ENCODE measurements at regions of chr14 and their contacts with region 1.

Region 1: GRCh38 chr14:73173092-73173735 is 36.9 kb downstream of the PSEN1 start:
- DNase-seq: peak; percentile 73
- H3K4me3 ChIP-seq: no peak overlapping the region
- H3K27ac ChIP-seq: no peak overlapping the region
- H3K4me1 ChIP-seq: no peaks in the 10 kb centered on the region
- H3K27me3 ChIP-seq: no peaks in the 10 kb centered on the region
- CTCF ChIP-seq: peak; percentile 21 to 25
- POLR2A ChIP-seq: no peak

Region 2: GRCh38 chr14:73049428-73049827 is 123.8 kb before region 1 on chr14:
- CTCF ChIA-PET with region 1: no interaction called
- POLR2A ChIA-PET with region 1: no interaction called
- dilution Hi-C with region 1: no loop called
- intact Hi-C with region 1: no loop called
- DNase-seq: no peak
- H3K4me3 ChIP-seq: no peak overlapping the region
- H3K27ac ChIP-seq: no peak overlapping the region
- H3K4me1 ChIP-seq: no peaks in the 10 kb centered on the region
- H3K27me3 ChIP-seq: no peaks in the 10 kb centered on the region
- CTCF ChIP-seq: no peak
- POLR2A ChIP-seq: no peak

Region 3: DNA sequence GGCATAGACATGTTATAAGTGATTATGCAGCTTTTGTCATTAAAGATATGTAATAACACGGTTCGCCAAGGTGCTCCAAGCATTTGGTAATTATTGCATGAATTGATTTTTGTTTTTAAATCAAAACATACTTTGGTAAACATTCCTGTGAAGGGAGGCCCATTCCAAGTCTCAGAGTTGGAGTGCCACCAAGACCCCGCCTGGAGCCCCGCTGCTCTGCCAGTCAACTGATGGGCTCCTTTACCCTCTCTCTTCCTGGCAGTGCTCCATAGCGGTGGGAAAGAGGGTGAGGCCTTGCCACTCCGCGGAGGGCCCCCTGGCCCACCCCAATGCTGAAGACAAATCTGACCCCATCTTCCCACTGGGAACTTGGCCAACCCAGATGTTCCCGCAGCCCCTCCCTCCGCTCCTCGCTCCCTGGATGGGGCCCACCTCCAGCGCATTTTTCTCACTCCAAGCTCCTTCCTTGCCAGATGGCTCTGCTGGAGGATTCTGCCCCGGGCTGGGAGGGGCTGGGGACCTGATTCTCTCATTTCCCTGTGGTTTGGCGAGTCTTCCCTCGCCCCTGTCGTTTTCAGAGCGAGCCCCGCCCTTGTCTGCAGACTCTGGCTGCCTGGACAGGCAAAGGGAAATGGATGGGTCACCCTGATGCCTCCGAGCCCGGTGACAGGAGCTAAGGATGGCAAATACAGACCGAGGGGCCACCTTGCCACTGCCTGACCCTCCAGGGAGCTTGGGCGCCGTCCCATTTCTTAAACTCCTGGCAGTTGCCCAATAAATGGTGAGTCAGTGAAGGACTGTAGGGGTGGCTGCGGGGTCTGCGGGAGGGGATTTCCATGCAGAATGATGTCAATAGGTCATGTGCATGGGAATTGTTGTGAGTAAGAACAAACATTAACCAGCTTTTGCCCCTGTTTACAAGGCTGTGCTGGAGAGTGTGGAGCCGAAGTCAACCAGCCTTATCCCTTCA is 54.9 kb after region 1 on chr14:
- CTCF ChIA-PET with region 1: interaction called, 11 read pairs
- POLR2A ChIA-PET with region 1: no interaction called
- dilution Hi-C with region 1: no loop called
- intact Hi-C with region 1: no loop called
- DNase-seq: peak; percentile 96
- H3K4me3 ChIP-seq: peak overlapping the region in 1 of 3 experiments; percentile 11
- H3K27ac ChIP-seq: peak overlapping the region; percentile 78
- H3K4me1 ChIP-seq: peaks cover 36% of the 10 kb centered on the region
- H3K27me3 ChIP-seq: no peaks in the 10 kb centered on the region
- CTCF ChIP-seq: no peak
- POLR2A ChIP-seq: no peak

Region 4: GRCh38 chr14:73269729-73270531 is 96.7 kb after region 1 on chr14:
- CTCF ChIA-PET with region 1: interaction called, 39 read pairs
- POLR2A ChIA-PET with region 1: no interaction called
- dilution Hi-C with region 1: no loop called
- intact Hi-C with region 1: loop called (anchors 1 kb)
- DNase-seq: peak; percentile 61
- H3K4me3 ChIP-seq: peak overlapping the region; percentile 17 to 44 (median 32)
- H3K27ac ChIP-seq: peak overlapping the region; percentile 28
- H3K4me1 ChIP-seq: peaks cover 15% of the 10 kb centered on the region
- H3K27me3 ChIP-seq: no peaks in the 10 kb centered on the region
- CTCF ChIP-seq: no peak
- POLR2A ChIP-seq: peak; percentile 70

Region 5: DNA sequence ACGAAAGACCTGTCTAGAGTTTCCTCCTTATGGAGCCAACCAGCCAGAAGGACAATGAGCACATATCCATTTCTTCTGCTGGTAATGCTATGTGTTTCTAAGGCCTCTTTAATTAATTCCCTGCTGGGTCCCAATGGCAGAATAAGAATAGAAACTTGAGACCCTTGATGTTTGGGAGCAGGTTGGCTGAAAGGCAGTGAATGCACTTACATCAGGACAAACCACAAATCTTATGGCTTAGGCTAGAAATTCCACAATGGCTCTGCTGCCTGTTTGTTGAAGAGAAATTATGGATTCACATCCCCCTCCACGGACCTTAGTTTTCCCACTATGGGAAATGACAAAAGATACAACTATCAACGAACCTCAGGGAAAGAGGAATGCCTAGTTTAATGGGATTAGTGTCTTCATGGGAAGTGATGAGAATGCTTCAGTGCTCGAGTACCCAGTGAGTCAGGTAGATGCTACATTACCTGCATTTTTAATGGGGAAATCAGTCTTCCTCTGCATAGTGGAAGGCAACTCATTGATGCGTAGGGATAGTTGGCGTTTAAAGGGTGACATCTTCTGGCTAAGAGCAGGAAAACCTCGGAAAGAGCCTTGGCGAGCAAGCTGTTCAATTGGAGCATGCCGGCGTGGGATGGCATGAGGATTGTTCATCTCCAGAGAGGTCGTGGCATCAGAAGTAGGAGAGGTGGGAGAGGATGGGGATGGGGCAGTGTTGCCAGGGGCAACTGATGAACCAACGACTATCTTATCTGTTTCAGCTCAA is 110.6 kb after region 1 on chr14:
- CTCF ChIA-PET with region 1: interaction called, 43 read pairs
- POLR2A ChIA-PET with region 1: interaction called, 6 read pairs
- dilution Hi-C with region 1: no loop called
- intact Hi-C with region 1: no loop called
- DNase-seq: no peak
- H3K4me3 ChIP-seq: no peak overlapping the region
- H3K27ac ChIP-seq: no peak overlapping the region
- H3K4me1 ChIP-seq: no peaks in the 10 kb centered on the region
- H3K27me3 ChIP-seq: no peaks in the 10 kb centered on the region
- CTCF ChIP-seq: peak in 1 of 2 donors; percentile 25
- POLR2A ChIP-seq: no peak

Region 6: DNA sequence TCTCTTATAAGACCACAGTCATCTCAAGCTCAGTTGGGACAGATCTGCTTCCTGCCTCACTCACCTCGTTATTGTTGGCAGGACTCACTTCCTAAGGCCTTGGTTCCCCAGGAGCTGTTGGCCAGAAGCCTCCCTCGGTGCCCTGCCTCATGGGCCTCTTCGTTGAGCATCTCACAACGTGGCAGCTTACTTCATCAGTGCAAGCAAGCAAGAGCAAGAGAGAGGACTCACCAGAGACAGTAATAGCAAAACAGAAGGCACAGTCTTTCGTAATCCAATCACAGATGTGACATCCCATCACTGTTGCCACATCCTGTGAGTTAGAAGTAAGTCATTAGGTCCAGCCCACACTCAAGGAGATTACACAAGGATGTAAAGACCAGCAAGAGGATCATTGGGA is 290.2 kb after region 1 on chr14:
- CTCF ChIA-PET with region 1: interaction called, 11 read pairs
- POLR2A ChIA-PET with region 1: no interaction called
- dilution Hi-C with region 1: loop called (anchors 25 kb)
- intact Hi-C with region 1: no loop called
- DNase-seq: peak; percentile 86
- H3K4me3 ChIP-seq: no peak overlapping the region
- H3K27ac ChIP-seq: peak overlapping the region; percentile 70
- H3K4me1 ChIP-seq: peaks cover 81% of the 10 kb centered on the region
- H3K27me3 ChIP-seq: no peaks in the 10 kb centered on the region
- CTCF ChIP-seq: no peak
- POLR2A ChIP-seq: no peak

Region 7: GRCh38 chr14:73477618-73478266 is 304.5 kb after region 1 on chr14:
- CTCF ChIA-PET with region 1: interaction called, 96 read pairs
- POLR2A ChIA-PET with region 1: no interaction called
- dilution Hi-C with region 1: loop called (anchors 25 kb)
- intact Hi-C with region 1: loop called (anchors 1 kb)
- DNase-seq: no peak
- H3K4me3 ChIP-seq: no peak overlapping the region
- H3K27ac ChIP-seq: no peak overlapping the region
- H3K4me1 ChIP-seq: no peaks in the 10 kb centered on the region
- H3K27me3 ChIP-seq: no peaks in the 10 kb centered on the region
- CTCF ChIP-seq: no peak
- POLR2A ChIP-seq: no peak